Activated naive CD4-positive, alpha-beta T cell treated with anti-CD3 and anti-CD28 coated beads for 36 hours (primary cell): ENCODE measurements at regions of chr13 and their contacts with region 1.

Region 1: DNA sequence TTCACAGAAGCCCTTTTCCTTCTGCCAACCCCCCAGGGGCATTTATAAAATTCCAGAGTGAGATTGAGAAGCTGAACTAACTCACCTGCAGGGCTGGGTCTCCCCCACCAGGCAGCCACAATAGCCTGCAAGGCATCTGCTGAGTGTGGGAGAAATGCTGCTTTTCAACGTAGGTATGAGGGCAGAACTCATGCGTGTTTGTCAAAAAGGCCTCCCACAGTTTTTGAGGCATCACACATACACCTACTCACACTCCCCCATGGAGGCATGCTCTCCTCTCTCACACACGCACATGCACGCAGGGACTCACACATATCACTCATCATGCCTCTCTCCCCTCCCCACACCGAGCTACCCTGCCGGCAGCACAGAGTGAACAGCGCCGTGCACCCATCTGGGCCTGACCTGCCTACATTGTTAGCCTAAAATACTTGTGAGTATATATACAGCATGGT is 390.5 kb downstream of the FGF9 start:
- DNase-seq: peak; percentile 64
- H3K4me3 Mint-ChIP-seq: peak overlapping the region; percentile 51
- H3K27ac Mint-ChIP-seq: peak overlapping the region; percentile 87
- H3K4me1 Mint-ChIP-seq: peaks cover 61% of the 10 kb centered on the region
- H3K27me3 Mint-ChIP-seq: no peaks in the 10 kb centered on the region

Region 2: DNA sequence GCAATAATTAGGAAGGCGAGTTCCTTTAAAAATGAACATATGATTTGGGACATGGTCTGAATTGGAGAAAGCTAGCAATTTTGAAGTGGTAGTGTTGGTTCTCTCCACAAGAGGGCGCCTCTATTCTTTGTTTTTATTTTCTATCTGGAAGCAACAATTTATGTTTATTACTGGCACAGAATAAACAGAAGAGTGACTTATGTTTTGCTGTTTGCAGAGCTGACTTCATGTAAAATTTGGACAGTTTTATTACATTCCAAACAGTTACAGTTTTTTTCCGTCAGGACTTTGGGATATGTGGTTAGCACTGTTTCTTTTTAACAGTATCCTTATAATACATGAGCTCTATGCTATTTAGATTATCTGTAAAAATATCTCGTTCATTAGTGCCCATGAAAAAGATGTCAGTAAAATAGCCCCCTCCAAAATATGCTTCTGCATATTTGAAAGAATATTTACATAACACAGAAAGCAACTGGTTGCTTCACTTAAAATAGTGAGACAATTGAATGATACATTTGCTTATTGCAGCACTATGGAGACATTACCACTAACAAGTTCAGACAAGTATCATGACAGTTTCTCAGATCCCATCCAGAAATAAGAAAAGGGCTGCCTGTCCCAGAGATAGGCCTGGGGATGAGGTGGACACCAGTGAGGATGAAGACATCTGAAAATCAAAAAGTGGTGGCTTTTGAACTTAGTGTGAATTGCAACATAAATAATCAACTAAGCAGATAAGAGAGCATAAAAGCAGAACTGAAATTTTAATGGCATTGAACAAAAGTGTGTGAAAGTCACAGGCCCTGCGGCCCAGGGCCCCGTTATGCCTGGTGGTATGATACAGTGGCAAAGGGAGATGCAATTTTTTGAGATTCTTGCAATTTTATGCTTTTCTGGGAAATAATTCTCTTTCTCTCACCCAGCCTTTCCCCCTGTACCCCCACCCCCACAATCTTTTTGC is 422.8 kb before region 1 on chr13:
- CTCF ChIA-PET with region 1: no interaction called
- intact Hi-C with region 1: loop called (anchors 1 kb)
- DNase-seq: peak; percentile 54
- H3K4me3 Mint-ChIP-seq: no peak overlapping the region
- H3K27ac Mint-ChIP-seq: no peak overlapping the region
- H3K4me1 Mint-ChIP-seq: no peaks in the 10 kb centered on the region
- H3K27me3 Mint-ChIP-seq: peaks cover 3% of the 10 kb centered on the region

Region 3: GRCh38 chr13:21670883-21671619 is 390.3 kb before region 1 on chr13 and contains the start of gene FGF9:
- CTCF ChIA-PET with region 1: no interaction called
- intact Hi-C with region 1: loop called (anchors 2 kb)
- DNase-seq: peak; percentile 79
- H3K4me3 Mint-ChIP-seq: peak within 1 kb of the TSS; percentile 80
- H3K27ac Mint-ChIP-seq: no peak within 1 kb of the TSS
- H3K4me1 Mint-ChIP-seq: peaks cover 34% of the 10 kb centered on the region
- H3K27me3 Mint-ChIP-seq: peaks cover 32% of the 10 kb centered on the region
- total RNA-seq, gene FGF9: not detected

Region 4: GRCh38 chr13:21849323-21849722 is 212.1 kb before region 1 on chr13:
- CTCF ChIA-PET with region 1: no interaction called
- intact Hi-C with region 1: loop called (anchors 1 kb)
- DNase-seq: peak; percentile 40
- H3K4me3 Mint-ChIP-seq: no peak overlapping the region
- H3K27ac Mint-ChIP-seq: no peak overlapping the region
- H3K4me1 Mint-ChIP-seq: no peaks in the 10 kb centered on the region
- H3K27me3 Mint-ChIP-seq: no peaks in the 10 kb centered on the region

Region 5: DNA sequence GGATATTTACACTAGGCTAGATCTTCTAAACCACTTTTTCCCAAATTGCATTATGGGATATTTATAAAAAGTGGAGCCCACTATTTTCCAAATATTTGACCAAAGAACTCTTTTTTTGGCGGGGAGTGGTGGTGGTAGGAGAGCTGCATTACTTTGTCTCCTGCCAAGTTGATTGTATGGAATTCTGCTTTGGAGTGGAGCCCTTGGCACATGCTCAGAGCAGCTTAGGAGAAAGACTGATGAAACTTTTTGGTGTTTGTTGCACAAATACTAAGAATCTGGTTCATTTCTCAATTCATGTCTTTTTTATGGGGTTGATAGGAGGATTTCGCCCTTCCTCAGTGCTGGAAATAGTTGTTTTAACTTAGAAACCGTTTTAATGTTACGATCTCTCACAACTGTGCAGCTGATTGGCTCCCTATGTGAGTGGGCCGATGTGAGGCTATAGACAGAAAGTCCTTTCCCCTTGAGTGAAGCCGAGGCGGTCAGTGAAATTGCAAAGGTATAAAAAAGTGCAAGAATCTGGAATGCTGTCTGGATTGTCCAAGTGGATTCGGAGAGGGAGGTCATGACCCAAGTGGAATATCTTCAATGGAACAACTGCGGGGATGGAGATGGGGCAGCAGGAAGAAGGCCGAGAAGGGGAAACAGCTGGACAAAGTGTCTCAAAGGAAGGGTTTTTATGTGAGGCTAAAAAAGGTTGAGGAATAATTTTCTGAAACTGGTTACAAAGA is 25.4 kb after region 1 on chr13:
- CTCF ChIA-PET with region 1: no interaction called
- intact Hi-C with region 1: no loop called
- DNase-seq: no peak
- H3K4me3 Mint-ChIP-seq: no peak overlapping the region
- H3K27ac Mint-ChIP-seq: no peak overlapping the region
- H3K4me1 Mint-ChIP-seq: peaks cover 12% of the 10 kb centered on the region
- H3K27me3 Mint-ChIP-seq: no peaks in the 10 kb centered on the region

Region 6: GRCh38 chr13:22114630-22115311 is 53.4 kb after region 1 on chr13:
- CTCF ChIA-PET with region 1: no interaction called
- intact Hi-C with region 1: loop called (anchors 1 kb)
- DNase-seq: peak; percentile 30
- H3K4me3 Mint-ChIP-seq: no peak overlapping the region
- H3K27ac Mint-ChIP-seq: peak overlapping the region; percentile 47
- H3K4me1 Mint-ChIP-seq: peaks cover 25% of the 10 kb centered on the region
- H3K27me3 Mint-ChIP-seq: no peaks in the 10 kb centered on the region

Region 7: DNA sequence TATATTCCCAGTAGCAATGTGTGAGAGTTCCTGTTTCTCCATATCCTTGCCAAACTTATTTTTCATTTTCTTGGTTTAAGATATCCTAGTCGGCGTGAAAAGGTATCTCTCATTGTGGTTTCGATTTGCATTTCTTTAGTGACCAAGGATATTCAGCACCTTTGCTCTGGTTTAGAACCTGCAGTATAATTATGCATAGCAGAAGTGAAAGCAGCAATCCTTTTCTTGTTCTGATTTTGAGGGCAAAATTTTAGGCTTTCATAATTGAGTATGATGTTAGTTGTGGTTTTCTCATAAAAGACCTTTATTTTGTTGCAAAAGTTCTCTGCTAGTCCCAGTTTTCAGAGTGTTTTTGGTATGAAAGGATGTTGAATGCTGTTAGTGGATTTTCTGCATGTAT is 100.5 kb after region 1 on chr13:
- CTCF ChIA-PET with region 1: no interaction called
- intact Hi-C with region 1: loop called (anchors 2 kb)
- DNase-seq: no peak
- H3K4me3 Mint-ChIP-seq: no peak overlapping the region
- H3K27ac Mint-ChIP-seq: no peak overlapping the region
- H3K4me1 Mint-ChIP-seq: peaks cover 25% of the 10 kb centered on the region
- H3K27me3 Mint-ChIP-seq: no peaks in the 10 kb centered on the region

Region 8: GRCh38 chr13:22278336-22278929 is 217.1 kb after region 1 on chr13:
- CTCF ChIA-PET with region 1: no interaction called
- intact Hi-C with region 1: loop called (anchors 1 kb)
- DNase-seq: peak; percentile 84
- H3K4me3 Mint-ChIP-seq: no peak overlapping the region
- H3K27ac Mint-ChIP-seq: no peak overlapping the region
- H3K4me1 Mint-ChIP-seq: peaks cover 10% of the 10 kb centered on the region
- H3K27me3 Mint-ChIP-seq: no peaks in the 10 kb centered on the region